CD4-positive, alpha-beta T cell (primary cell): ENCODE measurements at regions of chr11 and their contacts with region 1.

Region 1: DNA sequence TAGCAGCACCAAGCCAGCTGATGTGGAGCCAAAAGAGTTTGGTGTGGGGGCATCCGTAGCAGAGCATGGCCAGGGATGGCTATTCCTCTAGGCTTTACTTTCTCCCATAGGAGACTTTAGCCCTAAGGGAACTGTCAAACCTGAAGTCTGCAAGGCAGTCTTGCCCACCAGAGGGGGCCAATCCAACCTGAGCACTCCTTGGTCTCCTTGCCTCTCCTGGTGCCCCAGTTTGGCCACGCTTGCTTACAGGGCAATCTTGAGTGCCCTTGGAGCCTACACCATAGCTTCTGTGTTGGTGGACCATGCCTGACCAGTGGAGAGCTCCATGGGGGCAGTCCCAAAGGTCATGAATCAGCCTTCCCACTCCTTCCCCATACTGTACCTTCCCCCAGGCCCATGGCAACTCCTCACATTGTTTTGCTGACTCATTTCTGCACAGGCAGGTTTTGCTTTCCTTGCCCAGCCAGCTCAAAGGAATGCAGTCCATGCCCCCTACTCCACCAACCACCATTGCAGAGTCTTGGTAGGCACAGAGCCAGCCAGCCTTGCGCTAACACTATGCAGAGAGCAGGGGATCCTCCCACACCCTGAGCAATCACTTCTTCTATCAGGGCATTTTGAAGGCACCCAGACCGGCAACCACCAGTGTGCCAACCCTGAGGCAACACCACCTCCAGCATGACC is 1421.2 kb upstream of the RAG2 start:
- DNase-seq: no peak
- ATAC-seq: no peak
- H3K4me3 ChIP-seq: no peak overlapping the region
- H3K4me3 Mint-ChIP-seq: no peak overlapping the region
- H3K27ac ChIP-seq: no peak overlapping the region
- H3K27ac Mint-ChIP-seq: no peak overlapping the region
- H3K4me1 ChIP-seq: no peaks in the 10 kb centered on the region
- H3K4me1 Mint-ChIP-seq: no peaks in the 10 kb centered on the region
- H3K27me3 ChIP-seq: no peaks in the 10 kb centered on the region
- H3K27me3 Mint-ChIP-seq: no peaks in the 10 kb centered on the region
- CTCF ChIP-seq: no peak

Region 2: GRCh38 chr11:38038777-38039176 is 19.6 kb after region 1 on chr11:
- CTCF ChIA-PET with region 1: no interaction called
- POLR2A ChIA-PET with region 1: no interaction called
- intact Hi-C with region 1: no loop called
- DNase-seq: no peak
- ATAC-seq: no peak
- H3K4me3 ChIP-seq: no peak overlapping the region
- H3K4me3 Mint-ChIP-seq: no peak overlapping the region
- H3K27ac ChIP-seq: no peak overlapping the region
- H3K27ac Mint-ChIP-seq: no peak overlapping the region
- H3K4me1 ChIP-seq: no peaks in the 10 kb centered on the region
- H3K4me1 Mint-ChIP-seq: no peaks in the 10 kb centered on the region
- H3K27me3 ChIP-seq: no peaks in the 10 kb centered on the region
- H3K27me3 Mint-ChIP-seq: no peaks in the 10 kb centered on the region
- CTCF ChIP-seq: no peak

Region 3: DNA sequence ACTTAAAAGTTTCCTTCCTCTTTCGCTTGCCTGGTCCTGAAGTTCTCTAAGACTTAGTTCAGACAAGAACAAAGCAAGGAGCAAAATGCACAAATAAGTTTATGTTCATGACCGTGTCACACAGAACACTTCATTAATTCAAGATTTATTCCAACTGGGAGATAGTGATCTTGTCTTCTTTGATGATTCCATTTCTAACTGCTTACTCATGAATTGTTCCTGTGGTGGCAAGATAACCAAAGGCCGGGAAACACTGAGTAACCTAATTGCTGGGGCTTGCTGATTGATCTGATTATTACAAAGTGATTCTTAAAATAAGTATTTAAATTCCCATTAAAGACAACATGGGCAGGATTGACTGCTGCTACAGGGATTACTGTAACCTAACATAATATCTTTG is 41.7 kb after region 1 on chr11:
- CTCF ChIA-PET with region 1: no interaction called
- POLR2A ChIA-PET with region 1: no interaction called
- intact Hi-C with region 1: loop called in 1 of 2 experiments (anchors 5 kb)
- DNase-seq: no peak
- ATAC-seq: no peak
- H3K4me3 ChIP-seq: no peak overlapping the region
- H3K4me3 Mint-ChIP-seq: no peak overlapping the region
- H3K27ac ChIP-seq: no peak overlapping the region
- H3K27ac Mint-ChIP-seq: no peak overlapping the region
- H3K4me1 ChIP-seq: no peaks in the 10 kb centered on the region
- H3K4me1 Mint-ChIP-seq: no peaks in the 10 kb centered on the region
- H3K27me3 ChIP-seq: no peaks in the 10 kb centered on the region
- H3K27me3 Mint-ChIP-seq: no peaks in the 10 kb centered on the region
- CTCF ChIP-seq: no peak